ENCODE measurements at regions of chr19 and their contacts with region 1.

Region 1: DNA sequence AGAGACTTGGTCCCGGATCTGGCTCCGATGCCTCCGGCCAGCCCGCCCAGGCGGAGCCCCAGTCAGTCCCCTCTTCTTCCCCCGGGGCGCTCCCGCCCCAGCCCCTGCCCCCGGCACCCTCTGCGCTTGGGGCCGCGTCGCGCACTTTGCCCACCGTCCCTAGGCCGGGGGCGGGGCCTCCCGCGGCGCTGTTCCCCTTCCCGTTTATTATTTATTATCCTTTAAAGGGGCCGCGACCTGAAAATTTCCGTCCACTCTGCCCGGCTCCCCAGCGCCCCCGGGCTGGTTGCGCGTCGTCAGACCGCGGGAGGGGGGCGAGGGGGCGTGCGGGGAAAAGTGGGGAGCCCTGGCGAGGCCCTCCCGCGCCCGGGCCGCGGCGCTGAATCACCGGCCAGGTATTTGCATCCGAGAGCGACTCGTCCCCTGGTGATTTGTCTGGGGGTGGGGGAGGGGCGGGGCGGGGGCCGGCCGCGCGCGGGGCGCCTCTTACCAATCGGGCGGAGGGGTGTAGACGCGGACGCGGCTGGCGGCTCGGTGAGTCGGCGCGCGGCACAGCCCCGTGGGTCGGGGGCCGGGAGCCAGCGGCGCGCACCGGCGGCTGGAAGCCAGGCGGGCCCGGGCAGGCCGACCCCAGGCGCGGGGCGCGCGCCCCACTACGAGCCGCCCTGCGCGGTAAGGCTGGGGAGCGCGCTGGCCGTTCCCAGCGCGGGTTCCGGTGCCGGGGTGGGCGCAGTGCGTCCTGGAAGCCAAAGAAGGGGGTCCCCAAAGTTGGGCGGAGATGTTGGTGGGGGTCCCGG is at the start of gene ARID3A:
- DNase-seq: peak; percentile 82
- ATAC-seq: peak; percentile 73
- H3K4me3 ChIP-seq: peak within 1 kb of the TSS; percentile 96
- H3K27ac ChIP-seq: peak within 1 kb of the TSS; percentile 97
- H3K4me1 ChIP-seq: peaks cover 5% of the 10 kb centered on the region
- H3K27me3 ChIP-seq: peaks cover 4% of the 10 kb centered on the region
- CTCF ChIP-seq: 0 out of 2 replicates have a peak, but pooled peaks have one; percentile 4
- POLR2A ChIP-seq: peak; percentile 59
- RAD21 ChIP-seq: no peak
- total RNA-seq, gene ARID3A: 16.0 and 16.7 TPM in 2 replicates

Region 2: DNA sequence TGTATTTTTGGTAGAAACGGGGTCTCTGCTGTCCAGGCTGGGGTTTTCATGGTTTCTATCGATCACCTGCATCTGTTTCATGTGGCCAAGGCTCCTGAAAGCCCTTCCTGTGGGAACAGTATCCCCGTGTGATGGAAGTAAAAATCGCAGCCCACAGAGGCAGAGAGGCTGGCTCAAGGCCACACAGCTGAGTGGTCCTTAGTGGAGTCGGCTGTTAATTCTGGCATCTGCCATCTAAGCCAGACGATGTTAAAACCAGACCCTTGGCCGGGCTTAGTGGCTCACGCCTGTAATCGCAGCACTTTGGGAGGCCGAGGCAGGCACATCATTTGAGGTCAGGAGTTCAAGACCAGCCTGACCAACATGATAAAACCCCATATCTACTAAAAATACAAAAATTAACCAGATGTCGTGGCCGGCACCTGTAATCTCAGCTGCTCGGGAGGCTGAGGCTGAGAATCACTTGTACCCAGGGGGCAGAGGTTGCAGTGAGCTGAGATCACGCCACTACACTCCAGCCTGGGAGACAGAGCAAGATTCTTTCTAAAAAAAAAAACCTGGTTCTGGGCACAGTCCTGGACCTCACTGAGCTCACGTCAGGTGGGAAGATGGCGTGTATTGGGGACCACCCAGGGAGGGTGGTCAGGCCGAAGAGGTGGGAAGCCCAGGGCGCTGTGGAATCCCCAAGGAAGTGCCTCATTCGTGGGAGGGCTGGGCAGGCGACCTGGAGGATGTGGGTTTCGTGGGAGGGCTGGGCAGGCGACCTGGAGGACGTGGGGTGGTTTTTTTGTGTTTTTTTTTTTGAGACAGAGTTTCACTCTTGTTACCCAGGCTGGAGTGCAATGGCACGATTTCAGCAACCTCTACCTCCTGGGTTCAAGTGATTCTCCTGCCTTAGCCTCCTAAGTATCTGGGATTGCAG is 193.3 kb before region 1 on chr19:
- CTCF ChIA-PET with region 1: interaction called, 10 read pairs
- POLR2A ChIA-PET with region 1: no interaction called
- dilution Hi-C with region 1: no loop called
- in situ Hi-C with region 1: no loop called
- intact Hi-C with region 1: no loop called
- DNase-seq: no peak
- ATAC-seq: no peak
- H3K4me3 ChIP-seq: no peak overlapping the region
- H3K27ac ChIP-seq: no peak overlapping the region
- H3K4me1 ChIP-seq: no peaks in the 10 kb centered on the region
- H3K27me3 ChIP-seq: no peaks in the 10 kb centered on the region
- CTCF ChIP-seq: no peak
- POLR2A ChIP-seq: no peak
- RAD21 ChIP-seq: no peak

Region 3: GRCh38 chr19:771332-771785 is 154.4 kb before region 1 on chr19:
- CTCF ChIA-PET with region 1: no interaction called
- POLR2A ChIA-PET with region 1: no interaction called
- dilution Hi-C with region 1: no loop called
- in situ Hi-C with region 1: loop called (anchors 5 kb)
- intact Hi-C with region 1: loop called (anchors 1 kb)
- DNase-seq: peak; percentile 43
- ATAC-seq: no peak
- H3K4me3 ChIP-seq: no peak overlapping the region
- H3K27ac ChIP-seq: no peak overlapping the region
- H3K4me1 ChIP-seq: no peaks in the 10 kb centered on the region; the same call in 1 of the 2 replicates
- H3K27me3 ChIP-seq: no peaks in the 10 kb centered on the region
- CTCF ChIP-seq: peak; percentile 57
- POLR2A ChIP-seq: no peak
- RAD21 ChIP-seq: peak; percentile 47

Region 4: DNA sequence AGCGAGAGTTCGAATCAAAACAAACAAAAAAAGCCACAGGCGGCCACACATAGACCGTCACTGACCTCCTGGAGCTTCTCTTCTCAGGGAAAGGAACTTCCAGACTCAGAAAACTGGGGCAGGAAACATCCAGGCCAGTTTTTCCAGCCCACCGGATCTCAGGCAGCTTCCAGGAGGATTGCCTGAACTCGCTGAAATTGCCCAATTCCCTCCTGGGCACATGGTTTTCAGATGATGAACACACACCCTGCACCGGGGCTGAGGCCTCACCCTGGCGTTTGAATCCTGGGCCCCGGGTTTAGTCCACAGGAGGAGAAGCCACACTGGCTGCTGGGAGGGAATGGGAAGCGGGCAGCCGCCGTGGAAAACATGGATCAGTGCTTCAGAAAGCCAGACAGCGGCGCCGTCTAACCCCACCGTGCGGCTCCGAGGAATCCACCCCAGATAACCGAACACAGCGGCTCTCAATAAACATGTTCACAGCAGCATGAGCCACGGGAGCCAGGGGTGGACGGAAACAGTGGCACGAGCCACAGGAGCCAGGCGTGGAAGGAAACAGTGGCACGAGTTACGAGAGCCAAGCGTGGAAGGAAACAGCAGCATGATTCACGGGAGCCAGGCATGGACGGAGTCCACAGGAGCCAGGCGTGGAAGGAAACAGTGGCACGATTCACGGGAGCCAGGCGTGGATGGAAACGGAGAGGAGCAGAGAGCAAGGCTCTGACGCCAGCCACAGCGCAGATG is 146.6 kb before region 1 on chr19:
- CTCF ChIA-PET with region 1: no interaction called
- POLR2A ChIA-PET with region 1: no interaction called
- dilution Hi-C with region 1: no loop called
- in situ Hi-C with region 1: loop called (anchors 5 kb)
- intact Hi-C with region 1: no loop called
- DNase-seq: peak; percentile 94
- ATAC-seq: peak; percentile 85
- H3K4me3 ChIP-seq: no peak overlapping the region
- H3K27ac ChIP-seq: peak overlapping the region; percentile 83
- H3K4me1 ChIP-seq: peaks cover 19% of the 10 kb centered on the region
- H3K27me3 ChIP-seq: no peaks in the 10 kb centered on the region
- CTCF ChIP-seq: no peak
- POLR2A ChIP-seq: no peak
- RAD21 ChIP-seq: no peak

Region 5: GRCh38 chr19:913080-913748 is 12.5 kb before region 1 on chr19 and contains the start of gene R3HDM4:
- CTCF ChIA-PET with region 1: no interaction called
- POLR2A ChIA-PET with region 1: no interaction called
- dilution Hi-C with region 1: no loop called
- in situ Hi-C with region 1: no loop called
- intact Hi-C with region 1: no loop called
- DNase-seq: peak; percentile 37
- ATAC-seq: peak; percentile 93
- H3K4me3 ChIP-seq: peak within 1 kb of the TSS; percentile 100
- H3K27ac ChIP-seq: peak within 1 kb of the TSS; percentile 98
- H3K4me1 ChIP-seq: peaks cover 12% of the 10 kb centered on the region
- H3K27me3 ChIP-seq: peaks cover 12% of the 10 kb centered on the region
- CTCF ChIP-seq: no peak
- POLR2A ChIP-seq: peak; percentile 82
- RAD21 ChIP-seq: no peak
- total RNA-seq, gene R3HDM4: 8.9 and 9.0 TPM in 2 replicates

Region 6: GRCh38 chr19:984165-984967 is 58.6 kb after region 1 on chr19 and contains the start of gene WDR18:
- CTCF ChIA-PET with region 1: interaction called, 9 read pairs
- POLR2A ChIA-PET with region 1: interaction called, 33 read pairs
- dilution Hi-C with region 1: no loop called
- in situ Hi-C with region 1: loop called (anchors 5 kb)
- intact Hi-C with region 1: loop called (anchors 1 kb)
- DNase-seq: peak; percentile 81
- ATAC-seq: peak; percentile 89
- H3K4me3 ChIP-seq: peak within 1 kb of the TSS; percentile 81
- H3K27ac ChIP-seq: peak within 1 kb of the TSS; percentile 96
- H3K4me1 ChIP-seq: peaks cover 13% of the 10 kb centered on the region
- H3K27me3 ChIP-seq: no peaks in the 10 kb centered on the region
- CTCF ChIP-seq: peak; percentile 30
- POLR2A ChIP-seq: peak; percentile 81
- RAD21 ChIP-seq: no peak
- total RNA-seq, gene WDR18: 37.1 and 38.9 TPM in 2 replicates

Region 7: DNA sequence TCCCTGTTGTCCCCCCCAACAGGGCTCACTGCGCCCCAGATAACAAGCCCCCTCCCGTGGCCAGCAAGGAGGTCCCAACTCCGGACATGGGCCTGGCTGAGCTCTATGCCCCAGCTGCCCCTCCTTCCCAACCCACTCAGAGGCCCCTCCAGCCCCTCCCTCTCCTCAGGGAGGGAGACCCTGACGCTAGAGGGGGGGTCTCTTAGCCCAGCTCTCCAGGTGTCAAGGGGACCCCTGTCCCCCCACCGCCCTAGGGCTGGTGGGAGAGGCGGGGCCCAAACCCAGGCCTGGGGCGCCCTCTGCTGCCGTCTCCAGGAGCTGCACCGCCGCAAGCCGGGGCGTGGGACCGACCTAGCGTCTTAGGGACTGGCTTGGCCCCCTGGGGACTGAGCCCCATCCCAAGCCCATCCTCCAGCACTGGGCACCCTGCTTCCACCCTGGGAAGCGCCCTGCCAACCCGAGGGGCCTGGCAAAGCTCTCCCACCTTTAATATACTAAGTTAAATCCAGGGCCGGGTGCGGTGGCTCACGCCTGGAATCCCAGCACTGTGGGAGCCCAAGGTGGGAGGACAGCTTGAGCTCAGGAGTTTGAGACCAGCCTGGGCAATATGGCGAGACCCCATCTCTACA is 75.9 kb after region 1 on chr19:
- CTCF ChIA-PET with region 1: interaction called, 5 read pairs
- POLR2A ChIA-PET with region 1: no interaction called
- dilution Hi-C with region 1: no loop called
- in situ Hi-C with region 1: no loop called
- intact Hi-C with region 1: loop called (anchors 1 kb)
- DNase-seq: no peak
- ATAC-seq: peak; percentile 82
- H3K4me3 ChIP-seq: no peak overlapping the region
- H3K27ac ChIP-seq: no peak overlapping the region
- H3K4me1 ChIP-seq: no peaks in the 10 kb centered on the region
- H3K27me3 ChIP-seq: peaks cover 34% of the 10 kb centered on the region
- CTCF ChIP-seq: peak; percentile 79
- POLR2A ChIP-seq: no peak
- RAD21 ChIP-seq: peak; percentile 75

Region 8: DNA sequence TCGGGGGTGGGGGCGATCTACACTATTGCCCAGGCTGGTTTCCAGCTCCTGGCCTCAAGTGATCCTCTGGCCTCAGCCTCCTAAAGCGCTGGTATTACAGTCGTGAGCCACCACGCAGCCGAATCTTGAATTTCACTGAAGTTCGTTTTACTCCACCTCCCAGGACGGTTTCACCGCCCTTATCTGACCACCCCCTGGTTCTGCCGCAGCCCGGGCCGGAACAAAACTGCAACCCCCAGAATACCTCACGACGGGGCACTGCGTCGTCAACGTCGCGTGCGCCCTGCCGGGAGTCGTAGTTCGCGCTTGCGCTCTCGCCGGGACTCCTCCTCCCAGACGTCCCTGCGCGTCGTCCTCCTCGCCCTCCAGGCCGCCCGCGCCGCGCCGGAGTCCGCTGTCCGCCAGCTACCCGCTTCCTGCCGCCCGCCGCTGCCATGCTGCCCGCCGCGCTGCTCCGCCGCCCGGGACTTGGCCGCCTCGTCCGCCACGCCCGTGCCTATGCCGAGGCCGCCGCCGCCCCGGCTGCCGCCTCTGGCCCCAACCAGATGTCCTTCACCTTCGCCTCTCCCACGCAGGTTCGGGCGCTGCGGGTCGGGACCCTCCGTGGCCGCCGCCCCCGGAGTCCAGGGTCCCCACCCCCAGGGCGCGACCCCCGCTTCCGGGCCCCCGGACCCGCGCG is 315.8 kb after region 1 on chr19 and contains the start of gene ATP5F1D:
- CTCF ChIA-PET with region 1: no interaction called
- POLR2A ChIA-PET with region 1: no interaction called
- dilution Hi-C with region 1: no loop called
- in situ Hi-C with region 1: no loop called
- intact Hi-C with region 1: loop called (anchors 2 kb)
- DNase-seq: peak; percentile 95
- ATAC-seq: peak; percentile 66
- H3K4me3 ChIP-seq: peak within 1 kb of the TSS; percentile 76
- H3K27ac ChIP-seq: peak within 1 kb of the TSS; percentile 83
- H3K4me1 ChIP-seq: peaks cover 25% of the 10 kb centered on the region
- H3K27me3 ChIP-seq: no peaks in the 10 kb centered on the region
- CTCF ChIP-seq: no peak
- POLR2A ChIP-seq: peak; percentile 56; the same call in 1 of the 2 replicates
- RAD21 ChIP-seq: no peak
- total RNA-seq, gene ATP5F1D: 7.3 and 13.6 TPM in 2 replicates

Region 9: DNA sequence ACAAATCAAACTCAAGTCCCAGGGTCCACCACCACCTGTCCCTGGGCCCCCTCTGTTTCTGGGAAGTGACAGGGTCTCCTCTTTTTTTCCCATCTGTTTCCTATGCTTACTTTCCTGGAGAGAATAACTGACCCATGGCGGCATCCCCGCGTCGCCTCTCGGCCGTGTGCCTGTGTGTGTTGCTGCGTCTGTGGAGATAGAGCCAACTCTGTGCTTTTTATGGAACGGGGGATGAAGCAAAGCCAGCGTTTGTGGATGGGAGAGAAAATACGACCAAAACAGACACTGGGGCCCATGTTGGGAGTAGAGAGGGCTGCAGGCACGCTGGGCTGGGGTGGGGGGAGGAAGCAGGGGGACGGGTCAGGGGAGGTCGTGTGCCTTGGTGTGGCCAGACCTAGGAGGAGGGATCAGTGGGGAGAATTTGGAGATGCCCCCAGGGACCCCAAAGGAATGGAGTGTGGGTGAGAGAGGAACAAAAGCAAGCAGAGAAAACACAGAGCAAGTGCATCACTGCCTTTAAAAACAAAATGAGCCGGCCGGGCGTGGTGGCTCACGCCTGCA is 614.7 kb after region 1 on chr19:
- CTCF ChIA-PET with region 1: no interaction called
- POLR2A ChIA-PET with region 1: no interaction called
- dilution Hi-C with region 1: no loop called
- in situ Hi-C with region 1: no loop called
- intact Hi-C with region 1: no loop called
- DNase-seq: no peak
- ATAC-seq: peak; percentile 32; the same call in 1 of the 2 replicates
- H3K4me3 ChIP-seq: no peak overlapping the region
- H3K27ac ChIP-seq: no peak overlapping the region
- H3K4me1 ChIP-seq: peaks cover 2% of the 10 kb centered on the region; the same call in 1 of the 2 replicates
- H3K27me3 ChIP-seq: peaks cover 2% of the 10 kb centered on the region; the same call in 1 of the 2 replicates
- CTCF ChIP-seq: no peak
- POLR2A ChIP-seq: no peak
- RAD21 ChIP-seq: no peak